ENCODE measurements at regions of chr7 and their contacts with region 1.

Region 1: GRCh38 chr7:2800931-2801688 is 43.0 kb downstream of the GNA12 start:
- DNase-seq: peak; percentile 63 to 77 (median 68)
- ATAC-seq: peak in 1 of 4 donors; percentile 19
- H3K4me3 ChIP-seq: no peak overlapping the region
- H3K27ac ChIP-seq: peak overlapping the region in 11 of 12 donors; percentile 49 to 84 (median 75)
- H3K4me1 ChIP-seq: peaks cover 3 to 77% (median 60%) of the 10 kb centered on the region in 12 donors
- H3K27me3 ChIP-seq: no peaks in the 10 kb centered on the region
- CTCF ChIP-seq: no peak
- POLR2A ChIP-seq: no peak

Region 2: GRCh38 chr7:2844165-2844898 is 43.2 kb after region 1 on chr7 and contains the start of gene GNA12:
- intact Hi-C with region 1: loop called in 1 of 10 experiments (anchors 5 kb)
- DNase-seq: peak; percentile 98 to 99 (median 98)
- ATAC-seq: peak; percentile 95 to 99 (median 97)
- H3K4me3 ChIP-seq: peak within 1 kb of the TSS; percentile 64 to 94 (median 78)
- H3K27ac ChIP-seq: peak within 1 kb of the TSS in 11 of 12 donors; percentile 22 to 81 (median 68)
- H3K4me1 ChIP-seq: peaks cover 0 to 45% (median 27%) of the 10 kb centered on the region in 12 donors
- H3K27me3 ChIP-seq: no peaks in the 10 kb centered on the region
- CTCF ChIP-seq: no peak
- POLR2A ChIP-seq: peak in 1 of 2 donors; percentile 28
- total RNA-seq, gene GNA12: 30.0 to 56.5 (median 34.9) TPM

Measured in heart left ventricle (tissue), 16 donors.